PC-3 (cell line): ENCODE measurements at regions of chr2 and their contacts with region 1.

Region 1: GRCh38 chr2:231925303-231926179 is 655 bp downstream of the NPPC start:
- DNase-seq: peak; percentile 74
- ATAC-seq: peak; percentile 91
- H3K4me3 ChIP-seq: peak overlapping the region; percentile 63
- H3K27ac ChIP-seq: no peak overlapping the region
- H3K4me1 ChIP-seq: 0 out of 2 replicates have a peak, but pooled peaks cover 8% of the 10 kb centered on the region
- H3K27me3 ChIP-seq: peaks cover 25% of the 10 kb centered on the region
- CTCF ChIP-seq: peak; percentile 83

Region 2: DNA sequence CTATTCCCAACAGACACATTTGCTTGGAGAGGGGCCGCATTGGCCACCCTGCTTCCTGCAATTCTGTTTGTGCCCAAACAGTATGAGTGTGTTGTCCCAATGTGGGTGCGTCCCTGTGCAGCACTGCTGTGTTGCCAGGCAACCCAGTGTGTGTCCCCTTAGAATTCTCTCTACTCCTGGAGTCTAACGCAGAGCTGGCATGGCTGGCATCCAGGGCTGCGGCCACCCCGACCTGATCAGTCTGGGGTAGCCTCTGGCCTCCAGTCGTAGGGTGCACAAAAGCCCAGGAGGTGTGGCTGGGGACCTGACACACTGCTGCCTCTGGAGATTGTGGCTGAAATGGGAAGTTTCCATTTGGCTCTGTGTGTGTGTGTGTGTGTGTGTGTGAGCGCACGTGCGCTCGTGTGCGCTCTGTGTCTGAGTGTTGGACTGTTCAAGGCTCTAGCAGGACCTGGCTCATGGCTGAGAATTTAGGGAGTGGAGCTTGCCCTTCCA is 284.9 kb before region 1 on chr2:
- CTCF ChIA-PET with region 1: no interaction called
- POLR2A ChIA-PET with region 1: no interaction called
- intact Hi-C with region 1: no loop called
- DNase-seq: peak; percentile 21
- ATAC-seq: no peak
- H3K4me3 ChIP-seq: no peak overlapping the region
- H3K27ac ChIP-seq: no peak overlapping the region
- H3K4me1 ChIP-seq: peaks cover 17% of the 10 kb centered on the region
- H3K27me3 ChIP-seq: no peaks in the 10 kb centered on the region
- CTCF ChIP-seq: no peak

Region 3: GRCh38 chr2:231905026-231905425 is 20.5 kb before region 1 on chr2:
- CTCF ChIA-PET with region 1: no interaction called
- POLR2A ChIA-PET with region 1: no interaction called
- intact Hi-C with region 1: no loop called
- DNase-seq: no peak
- ATAC-seq: no peak
- H3K4me3 ChIP-seq: no peak overlapping the region
- H3K27ac ChIP-seq: no peak overlapping the region
- H3K4me1 ChIP-seq: 0 out of 2 replicates have a peak, but pooled peaks cover 2% of the 10 kb centered on the region
- H3K27me3 ChIP-seq: no peaks in the 10 kb centered on the region
- CTCF ChIP-seq: no peak

Region 4: GRCh38 chr2:232327105-232328041 is 401.8 kb after region 1 on chr2:
- CTCF ChIA-PET with region 1: interaction called, 3 read pairs
- POLR2A ChIA-PET with region 1: no interaction called
- intact Hi-C with region 1: loop called (anchors 1 kb)
- DNase-seq: peak; percentile 81
- ATAC-seq: peak; percentile 86
- H3K4me3 ChIP-seq: no peak overlapping the region
- H3K27ac ChIP-seq: no peak overlapping the region
- H3K4me1 ChIP-seq: no peaks in the 10 kb centered on the region
- H3K27me3 ChIP-seq: no peaks in the 10 kb centered on the region
- CTCF ChIP-seq: peak; percentile 69